ENCODE measurements at regions of chr11 and their contacts with region 1.

Region 1: DNA sequence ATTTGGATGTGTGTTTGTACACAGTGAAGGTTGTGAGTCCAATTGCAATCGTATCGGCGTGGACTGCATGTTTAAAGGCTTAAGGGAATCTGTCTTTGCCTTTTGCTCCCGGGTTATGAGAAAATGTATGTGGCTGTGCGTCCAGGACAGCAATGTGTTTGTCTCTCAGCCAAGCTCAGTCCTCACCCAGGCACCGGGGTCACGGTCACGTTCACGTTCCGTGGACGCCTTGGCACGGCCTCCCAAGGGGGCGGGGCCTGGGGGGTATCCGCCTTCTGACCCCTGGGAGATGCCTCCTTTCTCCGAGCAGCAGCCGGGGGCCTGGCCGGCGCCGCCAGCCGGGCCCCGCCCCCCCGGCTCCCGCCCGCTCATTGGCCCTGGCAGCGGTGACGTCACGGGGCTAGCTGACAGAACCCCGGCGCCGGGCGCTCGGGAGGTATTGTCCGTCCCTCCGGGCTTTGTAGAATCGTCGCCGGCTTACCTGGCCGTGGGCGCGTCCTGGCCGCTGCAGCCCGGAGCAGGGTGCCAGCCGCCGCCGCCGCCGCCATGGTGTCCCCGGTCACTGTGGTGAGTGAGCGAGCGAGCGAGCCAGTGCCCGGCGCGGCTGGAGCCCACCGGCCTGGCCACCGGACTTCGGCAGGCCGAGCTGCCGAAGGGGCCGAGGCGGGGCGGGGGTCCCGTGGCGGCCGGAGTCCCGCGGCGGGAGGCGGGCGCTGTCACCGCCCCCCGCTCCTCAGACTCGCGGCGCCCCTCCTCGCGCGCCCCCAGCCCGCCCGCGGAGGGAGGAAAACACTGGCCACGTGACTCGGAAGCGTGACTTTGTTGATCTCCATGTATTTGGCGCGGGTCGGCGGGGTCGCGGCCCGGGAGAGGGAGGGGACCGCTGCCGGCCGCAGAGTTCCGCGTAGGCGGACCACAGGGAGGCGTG is at the start of gene TMEM86A:
- DNase-seq: peak; percentile 89
- ATAC-seq: peak; percentile 99
- H3K4me3 ChIP-seq: peak within 1 kb of the TSS; percentile 37 to 71 (median 60)
- H3K4me3 Mint-ChIP-seq: peak within 1 kb of the TSS; percentile 90
- H3K27ac ChIP-seq: peak within 1 kb of the TSS in 1 of 2 donors; percentile 32
- H3K27ac Mint-ChIP-seq: peak within 1 kb of the TSS; percentile 48
- H3K4me1 ChIP-seq: peaks cover 13 to 17% of the 10 kb centered on the region in 2 donors
- H3K4me1 Mint-ChIP-seq: peaks cover 18% of the 10 kb centered on the region
- H3K27me3 ChIP-seq: peaks cover 0 to 17% (median 0%) of the 10 kb centered on the region in 4 experiments
- H3K27me3 Mint-ChIP-seq: peaks cover 16% of the 10 kb centered on the region
- CTCF ChIP-seq: no peak
- total RNA-seq, gene TMEM86A: 0.58 and 1.1 TPM in 2 replicates

Region 2: DNA sequence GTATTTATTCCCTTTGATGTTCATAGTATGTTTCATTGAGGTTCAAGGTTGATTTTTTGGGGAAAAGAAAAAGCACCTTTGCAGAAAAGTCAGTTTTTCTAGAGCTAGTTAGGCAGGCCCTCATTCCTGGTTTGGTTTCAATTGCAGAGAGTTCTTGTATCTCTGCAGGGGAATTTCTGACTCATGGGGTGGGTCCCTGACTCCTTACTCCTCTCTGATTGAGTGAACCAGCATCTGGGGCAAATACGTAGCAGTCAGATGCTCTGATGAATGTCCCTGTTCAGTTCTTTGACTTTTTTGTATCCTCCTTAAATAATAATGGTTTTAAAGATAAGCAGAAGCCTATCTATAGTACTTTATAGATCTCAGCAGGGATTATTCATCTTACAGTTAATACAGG is 1354.7 kb before region 1 on chr11:
- CTCF ChIA-PET with region 1: no interaction called
- POLR2A ChIA-PET with region 1: no interaction called
- intact Hi-C with region 1: no loop called
- DNase-seq: no peak
- ATAC-seq: no peak
- H3K4me3 ChIP-seq: no peak overlapping the region
- H3K4me3 Mint-ChIP-seq: no peak overlapping the region
- H3K27ac ChIP-seq: no peak overlapping the region
- H3K27ac Mint-ChIP-seq: no peak overlapping the region
- H3K4me1 ChIP-seq: no peaks in the 10 kb centered on the region
- H3K4me1 Mint-ChIP-seq: no peaks in the 10 kb centered on the region
- H3K27me3 ChIP-seq: no peaks in the 10 kb centered on the region
- H3K27me3 Mint-ChIP-seq: no peaks in the 10 kb centered on the region
- CTCF ChIP-seq: no peak

Region 3: DNA sequence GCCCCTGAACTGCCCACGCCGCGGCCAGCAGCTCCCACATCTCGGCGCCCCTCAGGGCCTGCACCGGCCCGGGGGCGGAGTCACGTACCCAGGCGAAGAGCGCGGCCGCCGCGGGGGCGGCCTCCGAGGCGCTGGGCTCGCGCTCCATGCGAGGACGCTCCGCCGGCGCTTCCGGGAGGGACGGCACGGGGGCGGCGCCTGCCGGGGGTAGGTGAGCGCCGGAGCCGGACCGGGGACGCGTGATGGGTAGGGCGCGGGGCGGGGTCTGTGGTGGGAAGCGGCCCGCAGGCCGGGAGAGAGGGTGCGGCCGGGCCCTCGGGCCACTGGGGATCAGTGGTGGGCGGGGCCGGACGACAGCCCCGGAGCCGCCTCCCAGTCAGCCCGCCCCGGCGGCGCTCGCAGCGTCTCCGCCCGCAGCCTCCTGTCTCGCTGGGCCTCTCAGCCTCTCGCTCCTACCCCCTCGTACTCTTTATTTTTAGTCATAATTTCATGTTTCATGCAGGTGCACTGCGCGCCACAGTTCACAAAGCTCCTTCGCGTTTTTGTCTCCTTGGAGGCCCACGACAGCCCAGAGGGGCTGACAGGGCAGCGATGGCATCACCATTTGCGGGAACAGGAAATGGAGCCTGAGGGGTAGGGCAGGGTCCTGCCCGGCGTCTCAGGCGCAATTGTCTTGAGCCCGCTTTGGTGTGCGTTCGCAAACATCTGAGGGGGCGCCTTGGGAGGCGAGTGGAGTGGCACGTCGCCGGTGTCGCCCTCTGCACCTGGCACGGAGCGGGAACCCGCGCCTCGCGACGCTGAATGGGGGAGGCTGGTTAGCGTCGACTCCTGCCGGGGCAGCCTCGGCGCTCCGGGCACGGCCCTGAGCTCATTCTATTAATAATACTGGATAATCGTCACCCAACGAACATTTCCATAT is 685.5 kb before region 1 on chr11 and contains the start of gene SERGEF:
- CTCF ChIA-PET with region 1: no interaction called
- POLR2A ChIA-PET with region 1: no interaction called
- intact Hi-C with region 1: loop called (anchors 2 kb)
- DNase-seq: peak; percentile 95
- ATAC-seq: peak; percentile 90
- H3K4me3 ChIP-seq: peak within 1 kb of the TSS; percentile 77 to 90 (median 83)
- H3K4me3 Mint-ChIP-seq: peak within 1 kb of the TSS; percentile 100
- H3K27ac ChIP-seq: peak within 1 kb of the TSS; percentile 61 to 65
- H3K27ac Mint-ChIP-seq: peak within 1 kb of the TSS; percentile 99
- H3K4me1 ChIP-seq: peaks cover 9 to 21% of the 10 kb centered on the region in 2 donors
- H3K4me1 Mint-ChIP-seq: peaks cover 27% of the 10 kb centered on the region
- H3K27me3 ChIP-seq: no peaks in the 10 kb centered on the region
- H3K27me3 Mint-ChIP-seq: no peaks in the 10 kb centered on the region
- CTCF ChIP-seq: no peak
- total RNA-seq, gene SERGEF: 52.5 and 54.3 TPM in 2 replicates

Region 4: DNA sequence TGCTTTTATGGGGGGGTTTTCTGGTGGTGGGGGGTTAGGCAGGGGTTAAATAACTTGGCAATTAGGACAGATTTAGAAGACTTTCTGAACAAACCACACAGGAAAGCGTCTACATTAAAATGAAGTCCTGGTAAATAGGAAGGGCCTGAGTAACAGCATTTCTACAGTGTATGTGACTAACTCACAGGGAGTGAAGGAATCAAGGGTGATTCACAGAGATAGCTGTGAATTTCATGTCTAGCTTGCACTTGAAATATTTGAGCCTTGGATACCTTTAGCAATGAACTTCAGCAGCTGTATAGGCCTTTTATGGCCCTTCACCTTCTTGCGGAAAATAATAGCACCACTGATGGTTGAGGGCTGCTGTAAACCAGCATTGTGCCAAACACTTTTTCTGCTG is 330.4 kb before region 1 on chr11:
- CTCF ChIA-PET with region 1: no interaction called
- POLR2A ChIA-PET with region 1: no interaction called
- intact Hi-C with region 1: no loop called
- DNase-seq: no peak
- ATAC-seq: no peak
- H3K4me3 ChIP-seq: no peak overlapping the region
- H3K4me3 Mint-ChIP-seq: no peak overlapping the region
- H3K27ac ChIP-seq: no peak overlapping the region
- H3K27ac Mint-ChIP-seq: no peak overlapping the region
- H3K4me1 ChIP-seq: no peaks in the 10 kb centered on the region
- H3K4me1 Mint-ChIP-seq: no peaks in the 10 kb centered on the region
- H3K27me3 ChIP-seq: no peaks in the 10 kb centered on the region
- H3K27me3 Mint-ChIP-seq: no peaks in the 10 kb centered on the region
- CTCF ChIP-seq: no peak

Region 5: DNA sequence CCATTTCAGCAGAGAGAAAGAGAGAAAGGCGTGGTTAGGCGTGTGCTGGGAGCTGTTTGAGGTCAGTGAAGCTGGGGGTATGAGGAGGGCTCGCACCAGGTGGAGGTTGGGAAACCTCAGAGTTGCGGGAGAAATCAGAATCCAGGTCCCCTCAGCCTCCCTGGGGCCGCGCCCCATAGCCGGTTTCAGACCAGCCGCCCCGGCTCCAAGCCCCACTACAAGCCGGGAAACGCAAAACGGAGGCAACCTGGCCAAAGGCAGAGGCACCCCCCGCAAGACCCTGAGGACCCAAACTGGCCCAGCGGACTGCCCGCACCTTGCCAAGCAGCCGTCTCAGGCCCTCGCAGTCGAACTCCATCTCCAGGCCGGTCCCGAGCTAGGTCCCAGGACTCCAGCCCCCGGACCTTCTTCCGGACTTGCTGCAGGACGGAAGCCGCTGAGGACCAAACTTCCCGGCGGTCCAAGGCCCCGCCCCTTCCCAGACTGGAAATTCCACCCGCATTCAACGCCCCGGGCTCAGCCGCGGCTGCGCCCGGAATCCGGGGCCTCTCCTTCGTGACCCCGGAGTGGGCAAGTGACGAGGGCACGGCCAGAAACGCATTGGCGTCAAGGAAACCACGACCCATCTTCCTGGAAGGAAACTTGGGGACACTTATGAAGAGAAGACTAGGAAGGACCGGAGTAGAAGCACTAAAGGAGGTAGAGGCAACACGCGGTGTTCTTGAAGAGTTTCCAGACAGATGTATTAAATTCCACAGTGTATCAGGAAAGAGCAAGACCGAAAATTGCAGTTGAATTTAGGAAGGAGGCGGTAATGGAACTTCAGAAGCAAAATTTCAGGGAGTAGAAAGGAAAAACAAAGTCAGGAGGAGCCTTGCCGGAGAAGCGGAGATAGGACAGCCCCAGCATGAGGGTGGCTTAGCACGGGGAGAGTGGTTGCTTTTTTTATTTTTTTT is 110.0 kb before region 1 on chr11 and contains the start of gene UEVLD:
- CTCF ChIA-PET with region 1: no interaction called
- POLR2A ChIA-PET with region 1: no interaction called
- intact Hi-C with region 1: loop called (anchors 2 kb)
- DNase-seq: peak; percentile 73
- ATAC-seq: peak; percentile 87
- H3K4me3 ChIP-seq: peak within 1 kb of the TSS; percentile 92 to 97 (median 96)
- H3K4me3 Mint-ChIP-seq: no peak within 1 kb of the TSS
- H3K27ac ChIP-seq: peak within 1 kb of the TSS; percentile 41 to 78
- H3K27ac Mint-ChIP-seq: no peak within 1 kb of the TSS
- H3K4me1 ChIP-seq: peaks cover 13 to 17% of the 10 kb centered on the region in 2 donors
- H3K4me1 Mint-ChIP-seq: peaks cover 3% of the 10 kb centered on the region
- H3K27me3 ChIP-seq: no peaks in the 10 kb centered on the region
- H3K27me3 Mint-ChIP-seq: no peaks in the 10 kb centered on the region
- CTCF ChIP-seq: no peak
- total RNA-seq, gene UEVLD: 12.4 and 12.8 TPM in 2 replicates

Region 6: DNA sequence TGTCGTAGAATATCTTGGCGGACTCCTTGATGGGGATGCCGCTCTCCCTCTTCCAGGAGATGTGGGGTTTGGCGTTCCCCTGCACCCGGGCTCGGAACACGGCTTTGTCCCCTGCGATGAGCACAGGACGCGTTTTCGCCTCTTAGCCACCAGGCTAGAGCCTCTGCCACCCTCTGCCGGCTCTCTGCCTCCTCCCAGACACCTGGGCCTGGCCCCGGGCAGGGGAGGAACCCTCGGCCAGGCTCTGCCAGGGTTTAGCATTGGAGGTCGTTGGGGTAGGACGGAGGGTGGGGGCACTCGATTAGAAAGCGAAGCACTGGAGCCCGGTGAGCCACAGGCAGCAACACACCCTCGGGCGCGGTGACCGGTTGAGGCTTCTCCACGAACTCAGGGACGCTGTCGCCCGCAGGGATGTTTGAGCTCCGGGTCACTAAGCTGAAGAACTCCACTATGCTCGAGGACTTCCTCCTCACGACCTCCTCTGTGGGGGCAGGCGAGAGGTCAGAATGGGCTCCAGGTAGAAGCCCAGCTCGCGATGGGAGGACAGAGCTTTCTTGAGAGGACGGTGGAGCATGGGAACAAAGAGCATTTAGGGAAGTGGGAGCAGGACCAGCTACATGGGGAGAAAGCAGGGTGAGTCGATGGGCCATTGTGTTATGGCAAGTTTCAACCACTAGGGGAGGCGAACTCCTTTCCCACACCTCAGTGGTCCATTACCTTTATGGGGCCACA is 23.1 kb after region 1 on chr11:
- CTCF ChIA-PET with region 1: interaction called, 9 read pairs
- POLR2A ChIA-PET with region 1: no interaction called
- intact Hi-C with region 1: loop called (anchors 1 kb)
- DNase-seq: peak; percentile 77
- ATAC-seq: peak; percentile 66
- H3K4me3 ChIP-seq: peak overlapping the region; percentile 24 to 80 (median 69)
- H3K4me3 Mint-ChIP-seq: peak overlapping the region; percentile 92
- H3K27ac ChIP-seq: peak overlapping the region in 1 of 2 donors; percentile 11
- H3K27ac Mint-ChIP-seq: peak overlapping the region; percentile 42
- H3K4me1 ChIP-seq: peaks cover 9 to 17% of the 10 kb centered on the region in 2 donors
- H3K4me1 Mint-ChIP-seq: peaks cover 9% of the 10 kb centered on the region
- H3K27me3 ChIP-seq: no peaks in the 10 kb centered on the region
- H3K27me3 Mint-ChIP-seq: peaks cover 6% of the 10 kb centered on the region
- CTCF ChIP-seq: peak; percentile 88

Region 7: DNA sequence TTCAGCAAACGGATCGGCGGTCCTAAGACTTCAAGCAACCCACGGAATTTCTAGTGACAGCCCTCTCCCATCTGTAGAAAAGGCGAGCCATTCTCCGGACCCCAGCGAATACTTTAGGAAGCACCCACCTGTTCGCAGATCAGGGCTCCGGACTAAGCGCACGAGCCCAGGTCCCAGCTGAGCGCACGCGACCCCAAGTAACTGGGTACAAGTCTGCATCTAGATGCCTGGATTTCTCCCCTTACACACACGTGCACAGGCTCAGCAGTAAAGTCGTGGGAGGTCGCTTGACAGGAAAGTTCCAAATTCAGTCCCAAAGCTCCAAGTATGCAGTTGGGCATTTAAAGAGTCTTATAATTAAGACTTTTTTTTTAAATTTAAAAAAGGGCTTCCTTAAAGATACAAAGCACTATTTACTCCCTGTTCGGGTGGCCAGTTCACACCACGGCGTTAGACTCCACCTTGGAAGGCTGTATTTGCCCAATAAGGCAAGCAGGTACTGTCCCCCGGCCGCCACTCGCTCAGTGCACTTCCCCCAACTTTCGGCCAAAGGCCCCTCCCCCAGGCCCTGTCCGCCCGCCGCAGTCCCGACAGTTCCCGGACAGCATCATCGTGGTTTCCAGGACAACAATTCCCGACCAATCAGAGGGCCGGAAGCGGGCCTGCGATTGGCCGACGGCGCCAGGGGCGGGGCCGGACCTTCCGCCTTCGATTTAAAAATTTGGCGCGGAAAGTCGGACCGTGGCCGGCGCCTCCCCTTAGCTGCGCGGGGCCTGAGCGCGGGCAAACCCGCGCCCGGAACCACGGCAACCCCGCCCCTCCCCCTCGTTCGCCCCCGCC is 542.0 kb after region 1 on chr11 and contains the start of gene E2F8:
- CTCF ChIA-PET with region 1: no interaction called
- POLR2A ChIA-PET with region 1: no interaction called
- intact Hi-C with region 1: loop called (anchors 5 kb)
- DNase-seq: peak; percentile 87
- ATAC-seq: peak; percentile 95
- H3K4me3 ChIP-seq: peak within 1 kb of the TSS; percentile 49 to 91 (median 66)
- H3K4me3 Mint-ChIP-seq: peak within 1 kb of the TSS; percentile 96
- H3K27ac ChIP-seq: no peak within 1 kb of the TSS
- H3K27ac Mint-ChIP-seq: peak within 1 kb of the TSS; percentile 73
- H3K4me1 ChIP-seq: peaks cover 20 to 22% of the 10 kb centered on the region in 2 donors
- H3K4me1 Mint-ChIP-seq: peaks cover 20% of the 10 kb centered on the region
- H3K27me3 ChIP-seq: peaks cover 0 to 44% (median 27%) of the 10 kb centered on the region in 4 experiments
- H3K27me3 Mint-ChIP-seq: peaks cover 37% of the 10 kb centered on the region
- CTCF ChIP-seq: no peak
- total RNA-seq, gene E2F8: 0.22 TPM in 1 of 2 replicates, not detected in the other

Measured in B cell (primary cell).